ENCODE measurements at regions of chr17 and their contacts with region 1.

Region 1: DNA sequence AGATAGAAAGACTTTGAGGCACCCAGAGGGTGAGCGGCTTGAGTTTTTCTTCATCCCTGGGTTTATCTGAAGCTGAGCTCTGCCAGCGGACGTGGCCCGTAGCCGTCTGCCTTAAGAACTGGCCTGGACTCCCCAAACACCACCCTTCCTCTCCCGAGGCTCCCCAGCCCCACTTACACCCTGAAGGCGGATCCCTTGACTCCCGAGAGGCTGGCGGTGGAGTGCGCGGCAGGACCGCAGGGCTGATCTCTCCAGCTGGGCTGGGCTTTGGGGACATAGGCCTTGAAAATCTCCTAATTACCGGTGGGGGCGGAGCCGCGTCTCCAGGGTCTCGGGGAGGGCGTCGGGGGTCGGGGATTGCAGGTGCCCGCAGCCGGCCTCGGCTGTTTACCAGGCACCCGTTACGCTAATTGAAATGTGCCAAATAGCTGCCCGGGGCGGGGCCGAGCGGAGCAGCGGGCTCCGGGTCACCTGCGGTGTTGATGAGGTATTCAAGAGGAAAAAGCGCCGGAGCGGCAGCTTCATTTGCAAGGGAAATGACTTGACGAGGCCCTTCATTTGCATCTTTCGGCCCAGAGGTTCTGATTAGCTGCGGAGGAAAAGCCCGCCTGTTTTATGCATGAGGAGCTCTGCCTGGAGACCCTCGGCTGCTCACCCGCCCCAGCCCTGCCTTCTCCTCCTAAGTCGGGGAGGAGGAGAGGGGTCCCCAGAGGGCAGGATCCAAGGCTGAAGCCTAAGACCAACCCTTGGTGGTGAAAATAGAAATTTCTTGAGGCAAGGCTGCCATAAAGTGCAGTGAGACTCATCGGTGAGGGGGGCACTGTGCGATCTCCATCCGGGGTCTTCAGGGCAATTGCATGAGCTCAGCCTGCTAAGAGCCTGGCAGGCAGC is 100.7 kb downstream of the MGAT5B start:
- DNase-seq: peak; percentile 71
- ATAC-seq: peak; percentile 90
- H3K4me3 Mint-ChIP-seq: peak overlapping the region; percentile 84
- H3K27ac Mint-ChIP-seq: peak overlapping the region; percentile 80
- H3K4me1 Mint-ChIP-seq: peaks cover 28% of the 10 kb centered on the region
- H3K27me3 Mint-ChIP-seq: peaks cover 28% of the 10 kb centered on the region
- CTCF ChIP-seq: no peak

Region 2: GRCh38 chr17:76737082-76737675 is 231.8 kb before region 1 on chr17 and contains the start of gene SRSF2:
- CTCF ChIA-PET with region 1: no interaction called
- POLR2A ChIA-PET with region 1: no interaction called
- intact Hi-C with region 1: loop called (anchors 1 kb)
- DNase-seq: peak; percentile 99
- ATAC-seq: peak; percentile 74
- H3K4me3 Mint-ChIP-seq: peak within 1 kb of the TSS; percentile 97
- H3K27ac Mint-ChIP-seq: peak within 1 kb of the TSS; percentile 96
- H3K4me1 Mint-ChIP-seq: peaks cover 50% of the 10 kb centered on the region
- H3K27me3 Mint-ChIP-seq: no peaks in the 10 kb centered on the region
- CTCF ChIP-seq: no peak
- total RNA-seq, gene SRSF2: 335 and 367 TPM in 2 replicates

Region 3: GRCh38 chr17:76893623-76894334 is 75.2 kb before region 1 on chr17:
- CTCF ChIA-PET with region 1: no interaction called
- POLR2A ChIA-PET with region 1: no interaction called
- intact Hi-C with region 1: no loop called
- DNase-seq: no peak
- ATAC-seq: no peak
- H3K4me3 Mint-ChIP-seq: no peak overlapping the region
- H3K27ac Mint-ChIP-seq: no peak overlapping the region
- H3K4me1 Mint-ChIP-seq: no peaks in the 10 kb centered on the region
- H3K27me3 Mint-ChIP-seq: no peaks in the 10 kb centered on the region
- CTCF ChIP-seq: no peak

Region 4: GRCh38 chr17:76957678-76958464 is 11.1 kb before region 1 on chr17:
- CTCF ChIA-PET with region 1: interaction called, 4 read pairs
- POLR2A ChIA-PET with region 1: interaction called, 49 read pairs
- intact Hi-C with region 1: loop called (anchors 1 kb)
- DNase-seq: peak; percentile 42
- ATAC-seq: peak; percentile 91
- H3K4me3 Mint-ChIP-seq: peak overlapping the region; percentile 81
- H3K27ac Mint-ChIP-seq: peak overlapping the region; percentile 66
- H3K4me1 Mint-ChIP-seq: peaks cover 31% of the 10 kb centered on the region
- H3K27me3 Mint-ChIP-seq: peaks cover 2% of the 10 kb centered on the region
- CTCF ChIP-seq: no peak

Region 5: DNA sequence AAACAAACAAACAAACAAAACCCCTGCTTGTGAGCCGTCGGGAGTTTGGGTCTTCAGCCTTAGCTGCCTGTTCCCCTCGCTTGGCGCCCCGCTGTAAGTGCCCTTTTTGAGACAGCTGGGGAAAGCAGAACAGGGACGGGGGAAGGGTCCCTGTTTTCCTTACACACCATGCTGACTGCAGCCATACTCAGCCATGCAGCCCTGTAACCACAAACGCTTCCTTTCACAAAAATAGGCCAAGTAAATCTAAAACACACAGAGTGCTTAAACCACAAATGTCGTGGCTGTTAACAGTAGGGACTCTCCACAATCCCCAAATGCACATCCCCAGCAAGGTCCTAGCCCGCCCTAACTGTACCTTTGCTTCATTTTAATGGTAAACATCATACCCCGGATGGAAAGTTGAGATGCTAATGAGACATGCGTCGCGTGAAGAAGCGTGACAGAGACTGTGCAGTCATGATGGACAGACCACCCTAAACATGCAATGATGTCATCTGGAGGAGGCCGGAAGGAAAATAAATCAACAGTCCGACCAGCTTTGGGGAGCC is 29.1 kb after region 1 on chr17:
- CTCF ChIA-PET with region 1: interaction called, 3 read pairs
- POLR2A ChIA-PET with region 1: interaction called, 26 read pairs
- intact Hi-C with region 1: loop called (anchors 1 kb)
- DNase-seq: peak; percentile 40
- ATAC-seq: peak; percentile 90
- H3K4me3 Mint-ChIP-seq: peak overlapping the region; percentile 68
- H3K27ac Mint-ChIP-seq: peak overlapping the region; percentile 74
- H3K4me1 Mint-ChIP-seq: peaks cover 40% of the 10 kb centered on the region
- H3K27me3 Mint-ChIP-seq: peaks cover 15% of the 10 kb centered on the region
- CTCF ChIP-seq: no peak